Uterus (tissue), 4 donors: ENCODE measurements at regions of chr20 and their contacts with region 1.

Region 1: GRCh38 chr20:62776692-62777527 is 19.4 kb upstream of the MRGBP start:
- DNase-seq: no peak
- H3K4me3 ChIP-seq: no peak overlapping the region
- H3K27ac ChIP-seq: no peak overlapping the region
- H3K4me1 ChIP-seq: no peaks in the 10 kb centered on the region
- H3K27me3 ChIP-seq: no peaks in the 10 kb centered on the region
- CTCF ChIP-seq: no peak
- POLR2A ChIP-seq: no peak

Region 2: GRCh38 chr20:62685781-62686555 is 90.9 kb before region 1 on chr20:
- intact Hi-C with region 1: loop called (anchors 10 kb)
- DNase-seq: no peak
- H3K4me3 ChIP-seq: no peak overlapping the region
- H3K27ac ChIP-seq: no peak overlapping the region
- H3K4me1 ChIP-seq: no peaks in the 10 kb centered on the region
- H3K27me3 ChIP-seq: peaks cover 0 to 12% of the 10 kb centered on the region in 2 donors
- CTCF ChIP-seq: no peak
- POLR2A ChIP-seq: no peak

Region 3: DNA sequence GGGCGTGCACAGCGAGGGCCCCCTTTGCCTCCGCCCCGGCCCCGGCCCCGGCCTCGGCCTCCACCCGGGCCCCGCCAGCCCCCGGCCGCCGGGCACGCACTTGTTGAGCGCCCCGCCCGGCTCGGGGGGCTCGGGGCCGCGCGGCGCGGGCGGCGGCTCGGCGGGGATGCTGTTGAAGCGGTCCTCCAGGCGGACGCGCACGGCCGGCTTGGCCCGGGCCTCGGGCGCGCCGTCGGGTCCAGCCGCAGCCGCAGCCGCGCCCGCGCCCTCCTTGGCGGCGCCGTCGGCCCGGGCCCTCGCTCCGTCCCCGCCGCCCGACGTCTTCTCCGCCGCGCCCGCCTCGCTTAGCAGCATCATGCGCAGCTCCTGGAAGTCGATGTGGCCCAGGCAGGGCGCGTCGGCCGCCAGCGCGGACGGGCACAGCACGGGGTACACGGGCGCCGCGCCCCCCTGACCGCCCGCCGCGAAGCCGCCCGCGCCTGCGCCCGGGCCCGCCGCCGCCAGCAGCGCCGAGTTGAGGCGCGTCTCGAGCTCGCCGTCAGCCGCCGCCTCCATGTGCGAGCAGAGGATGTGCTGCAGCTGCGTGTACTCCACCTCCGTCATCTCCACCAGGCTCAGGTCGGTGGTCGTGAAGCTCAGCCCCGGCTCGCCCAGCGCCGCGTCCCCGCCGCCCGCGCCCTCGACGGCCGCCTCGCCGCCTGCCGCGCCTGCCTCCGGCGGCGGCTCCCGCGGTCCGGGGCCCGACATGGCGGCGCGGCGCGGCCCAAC is 84.2 kb after region 1 on chr20:
- intact Hi-C with region 1: no loop called
- DNase-seq: peak in 1 of 2 donors; percentile 41
- H3K4me3 ChIP-seq: peak overlapping the region; percentile 28 to 42
- H3K27ac ChIP-seq: peak overlapping the region in 1 of 2 donors; percentile 68
- H3K4me1 ChIP-seq: peaks cover 0 to 7% of the 10 kb centered on the region in 2 donors
- H3K27me3 ChIP-seq: no peaks in the 10 kb centered on the region
- CTCF ChIP-seq: no peak
- POLR2A ChIP-seq: no peak

Region 4: GRCh38 chr20:63163596-63164455 is 386.9 kb after region 1 on chr20:
- intact Hi-C with region 1: no loop called
- DNase-seq: no peak
- H3K4me3 ChIP-seq: no peak overlapping the region
- H3K27ac ChIP-seq: no peak overlapping the region
- H3K4me1 ChIP-seq: no peaks in the 10 kb centered on the region
- H3K27me3 ChIP-seq: no peaks in the 10 kb centered on the region
- CTCF ChIP-seq: no peak
- POLR2A ChIP-seq: no peak